ENCODE measurements at regions of chr6 and their contacts with region 1.

Region 1: GRCh38 chr6:42928986-42929820 is at the start of gene CNPY3:
- DNase-seq: peak; percentile 96
- H3K4me3 Mint-ChIP-seq: peak within 1 kb of the TSS; percentile 96
- H3K27ac Mint-ChIP-seq: peak within 1 kb of the TSS; percentile 91
- H3K4me1 Mint-ChIP-seq: peaks cover 34% of the 10 kb centered on the region
- H3K27me3 Mint-ChIP-seq: no peaks in the 10 kb centered on the region
- total RNA-seq, gene CNPY3: 51.3 and 53.1 TPM in 2 replicates

Region 2: DNA sequence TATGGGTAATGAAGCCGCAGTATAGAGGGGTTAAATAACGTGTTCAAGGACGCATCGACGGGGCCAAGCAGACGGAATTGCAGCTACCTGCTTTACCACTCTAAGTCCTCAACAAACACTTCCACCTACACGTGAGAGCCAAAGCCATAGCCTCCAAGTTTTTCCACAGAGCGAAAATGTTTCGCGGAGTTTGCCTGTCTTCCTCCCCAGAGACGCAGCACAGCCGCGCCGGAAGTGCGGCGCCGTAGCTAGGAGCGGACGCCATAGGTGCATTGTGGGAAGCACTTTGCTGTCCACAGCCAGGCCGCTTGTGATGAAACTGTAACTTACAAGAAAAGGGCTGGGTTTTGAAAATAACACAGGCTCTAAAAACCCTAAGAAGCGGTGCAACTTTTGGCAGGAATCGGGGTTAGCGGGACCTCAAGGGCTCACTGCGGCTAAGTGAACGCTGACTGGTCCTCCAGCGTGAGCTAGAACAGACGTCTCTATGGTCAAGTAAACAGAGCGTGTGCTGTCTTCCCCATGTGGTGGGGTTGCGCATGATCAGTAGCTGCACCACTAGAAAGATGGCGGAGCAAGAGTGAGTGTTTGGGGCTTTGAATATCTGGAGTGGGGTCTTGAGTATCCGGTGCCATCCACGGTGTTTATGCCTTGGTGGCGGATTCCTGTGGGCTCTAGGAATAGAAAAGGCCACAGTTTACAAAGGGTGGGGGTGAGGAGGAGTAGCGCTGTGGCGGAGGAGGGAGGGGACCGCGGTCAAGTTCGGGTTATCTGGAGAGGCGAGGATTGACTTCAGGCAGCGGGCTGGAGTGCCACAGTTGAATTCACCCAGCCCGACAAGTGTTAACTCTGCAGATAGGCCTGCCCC is 49.6 kb before region 1 on chr6 and contains the start of gene RPL7L1:
- intact Hi-C with region 1: loop called (anchors 1 kb)
- DNase-seq: peak; percentile 84
- H3K4me3 Mint-ChIP-seq: peak within 1 kb of the TSS; percentile 94
- H3K27ac Mint-ChIP-seq: peak within 1 kb of the TSS; percentile 98
- H3K4me1 Mint-ChIP-seq: peaks cover 6% of the 10 kb centered on the region
- H3K27me3 Mint-ChIP-seq: no peaks in the 10 kb centered on the region
- total RNA-seq, gene RPL7L1: 149 and 151 TPM in 2 replicates

Region 3: DNA sequence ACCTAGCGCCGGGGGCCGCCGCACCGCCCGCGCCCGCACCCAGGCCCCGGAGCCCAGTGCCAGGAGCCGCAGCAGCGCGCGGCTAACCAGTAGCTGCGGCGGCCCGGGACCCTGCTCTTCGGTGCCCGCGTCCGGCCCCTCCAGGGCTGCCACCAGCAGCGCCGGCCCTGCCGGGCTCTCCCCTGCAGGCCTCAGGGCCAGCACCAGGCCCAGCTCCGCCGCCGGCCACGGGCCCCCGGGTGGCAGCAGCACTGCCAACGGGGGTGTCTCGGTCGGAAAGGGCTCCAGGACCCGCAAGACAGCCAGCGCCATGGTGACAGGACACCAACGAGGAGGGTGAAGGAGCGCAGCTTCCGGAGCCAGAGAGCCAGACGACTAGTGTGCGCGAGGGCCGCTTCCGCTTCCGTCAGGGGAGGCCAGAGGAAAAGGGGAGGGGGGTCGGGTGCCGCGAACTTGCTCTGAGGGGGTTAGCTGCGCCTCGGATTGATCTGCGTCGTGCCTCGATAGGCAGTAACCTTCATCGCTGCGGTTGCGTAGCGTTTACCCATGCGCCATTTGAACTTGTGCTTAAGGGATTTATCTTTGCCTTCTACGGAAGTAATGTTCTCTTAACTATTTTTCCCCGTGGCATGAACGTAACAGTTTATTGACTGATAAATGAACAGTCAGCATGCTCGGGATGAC is 49.8 kb after region 1 on chr6 and contains the start of gene PEX6:
- intact Hi-C with region 1: loop called (anchors 1 kb)
- DNase-seq: peak; percentile 96
- H3K4me3 Mint-ChIP-seq: peak within 1 kb of the TSS; percentile 91
- H3K27ac Mint-ChIP-seq: peak within 1 kb of the TSS; percentile 99
- H3K4me1 Mint-ChIP-seq: peaks cover 31% of the 10 kb centered on the region
- H3K27me3 Mint-ChIP-seq: no peaks in the 10 kb centered on the region
- total RNA-seq, gene PEX6: 26.0 and 27.8 TPM in 2 replicates

Region 4: DNA sequence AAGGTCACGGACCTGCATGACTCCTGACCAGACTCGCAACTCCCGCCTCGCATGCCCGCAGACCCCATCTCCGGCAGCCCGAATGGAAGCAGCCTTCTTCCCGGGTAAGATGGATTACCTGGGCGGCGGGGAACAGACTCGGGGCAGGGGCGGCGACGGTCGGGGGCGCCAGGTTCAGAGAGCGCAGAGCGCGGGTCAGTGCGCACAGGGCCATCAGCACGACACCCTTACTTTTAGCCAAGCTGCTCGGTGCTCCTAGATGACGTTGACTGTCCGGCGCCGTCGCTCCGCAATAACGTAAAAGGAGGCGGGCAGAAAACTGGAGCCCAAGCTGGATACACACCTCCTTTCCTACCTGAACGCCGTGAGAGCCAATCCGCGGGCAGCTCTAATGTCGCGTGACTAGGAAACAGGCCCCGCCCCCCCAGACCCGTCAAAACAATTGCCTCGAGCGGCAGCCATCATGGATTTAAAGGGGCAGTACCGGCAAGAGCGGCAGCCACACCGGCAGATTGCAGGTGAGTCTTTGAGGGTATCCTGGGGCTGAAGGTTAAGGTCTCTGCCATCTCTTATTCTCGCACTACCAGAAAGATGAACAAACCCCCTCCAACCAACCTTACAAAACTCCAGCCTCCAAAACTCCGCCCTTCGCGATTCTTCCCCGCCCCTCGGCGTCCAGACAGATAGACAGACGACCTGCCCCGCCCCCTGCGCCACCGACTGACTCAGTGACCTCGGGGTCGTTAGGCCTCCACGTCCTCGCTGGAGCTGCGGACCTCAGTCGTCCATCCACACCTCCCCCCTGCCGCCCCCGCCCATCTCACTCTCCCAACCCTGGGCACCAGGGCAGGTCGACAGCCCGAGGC is 130.2 kb after region 1 on chr6 and contains the starts of genes KLC4 and MRPL2:
- intact Hi-C with region 1: loop called (anchors 10 kb)
- DNase-seq: peak; percentile 96
- H3K4me3 Mint-ChIP-seq: peak within 1 kb of the TSS; percentile 93
- H3K27ac Mint-ChIP-seq: peak within 1 kb of the TSS; percentile 98
- H3K4me1 Mint-ChIP-seq: peaks cover 28% of the 10 kb centered on the region
- H3K27me3 Mint-ChIP-seq: no peaks in the 10 kb centered on the region
- total RNA-seq, gene KLC4: 11.7 and 14.1 TPM in 2 replicates
- total RNA-seq, gene MRPL2: 76.0 and 76.6 TPM in 2 replicates

Region 5: GRCh38 chr6:43150051-43150751 is 221.0 kb after region 1 on chr6:
- intact Hi-C with region 1: no loop called
- DNase-seq: no peak
- H3K4me3 Mint-ChIP-seq: no peak overlapping the region
- H3K27ac Mint-ChIP-seq: no peak overlapping the region
- H3K4me1 Mint-ChIP-seq: peaks cover 4% of the 10 kb centered on the region
- H3K27me3 Mint-ChIP-seq: no peaks in the 10 kb centered on the region

Region 6: GRCh38 chr6:43629505-43630300 is 700.5 kb after region 1 on chr6:
- intact Hi-C with region 1: loop called (anchors 2 kb)
- DNase-seq: peak; percentile 90
- H3K4me3 Mint-ChIP-seq: peak overlapping the region; percentile 100
- H3K27ac Mint-ChIP-seq: peak overlapping the region; percentile 98
- H3K4me1 Mint-ChIP-seq: peaks cover 37% of the 10 kb centered on the region
- H3K27me3 Mint-ChIP-seq: no peaks in the 10 kb centered on the region

Measured in activated T-helper 2 cell treated with anti-CD3 and anti-CD28 coated beads, Interferon-gamma antibody, Interleukin-2, Interleukin-4, amounts not matched to agents 10 μg/mL and 5 μg/mL and 100 μg/mL, durations not matched to agents 14 hours and 24 hours and 36 hours (primary cell).